A673 (cell line): ENCODE measurements at regions of chr19 and their contacts with region 1.

Region 1: DNA sequence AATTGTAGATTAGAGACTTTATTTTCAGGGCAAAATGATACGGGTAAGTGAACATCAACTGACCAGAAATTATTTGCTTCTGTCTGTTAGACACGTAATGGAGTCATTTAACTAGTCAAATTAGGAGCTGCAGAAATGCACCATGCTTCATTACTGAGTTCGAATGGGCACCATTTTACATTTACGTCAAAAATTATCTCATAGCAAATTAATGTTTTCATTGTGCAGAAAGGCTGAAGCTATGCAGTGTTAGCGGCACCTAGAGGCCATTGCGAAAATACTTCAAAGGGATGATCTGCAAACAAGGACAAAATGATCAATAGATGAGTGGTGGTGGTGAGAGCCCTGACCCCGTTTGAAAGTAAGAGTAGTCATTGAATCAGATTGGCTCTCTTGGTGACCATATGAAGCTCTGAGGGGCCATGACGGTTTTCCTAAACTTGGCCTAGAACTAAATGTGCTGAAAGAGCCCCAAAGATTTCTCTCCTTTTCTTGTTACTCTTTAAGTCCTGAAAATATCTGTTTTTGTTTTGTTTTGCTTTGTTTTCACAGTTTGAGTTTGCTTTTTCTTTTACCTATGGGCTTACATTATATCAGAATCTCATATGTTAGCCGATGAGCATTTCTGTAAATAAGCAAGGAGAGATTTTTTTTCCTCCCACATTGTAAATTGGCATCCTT is 277.9 kb downstream of the ZNF536 start:
- DNase-seq: peak; percentile 80
- H3K4me3 ChIP-seq: no peak overlapping the region
- H3K27ac ChIP-seq: no peak overlapping the region
- H3K4me1 ChIP-seq: no peaks in the 10 kb centered on the region
- H3K27me3 ChIP-seq: no peaks in the 10 kb centered on the region
- CTCF ChIP-seq: peak; percentile 89

Region 2: GRCh38 chr19:29735800-29736199 is 914.3 kb before region 1 on chr19:
- CTCF ChIA-PET with region 1: no interaction called
- POLR2A ChIA-PET with region 1: no interaction called
- intact Hi-C with region 1: loop called (anchors 5 kb)
- DNase-seq: no peak
- H3K4me3 ChIP-seq: no peak overlapping the region
- H3K27ac ChIP-seq: no peak overlapping the region
- H3K4me1 ChIP-seq: no peaks in the 10 kb centered on the region
- H3K27me3 ChIP-seq: no peaks in the 10 kb centered on the region
- CTCF ChIP-seq: no peak

Region 3: GRCh38 chr19:29873024-29873800 is 776.9 kb before region 1 on chr19:
- CTCF ChIA-PET with region 1: no interaction called
- POLR2A ChIA-PET with region 1: no interaction called
- intact Hi-C with region 1: loop called (anchors 10 kb)
- DNase-seq: peak; percentile 48
- H3K4me3 ChIP-seq: peak overlapping the region; percentile 52
- H3K27ac ChIP-seq: no peak overlapping the region
- H3K4me1 ChIP-seq: peaks cover 5% of the 10 kb centered on the region
- H3K27me3 ChIP-seq: no peaks in the 10 kb centered on the region
- CTCF ChIP-seq: peak; percentile 66

Region 4: DNA sequence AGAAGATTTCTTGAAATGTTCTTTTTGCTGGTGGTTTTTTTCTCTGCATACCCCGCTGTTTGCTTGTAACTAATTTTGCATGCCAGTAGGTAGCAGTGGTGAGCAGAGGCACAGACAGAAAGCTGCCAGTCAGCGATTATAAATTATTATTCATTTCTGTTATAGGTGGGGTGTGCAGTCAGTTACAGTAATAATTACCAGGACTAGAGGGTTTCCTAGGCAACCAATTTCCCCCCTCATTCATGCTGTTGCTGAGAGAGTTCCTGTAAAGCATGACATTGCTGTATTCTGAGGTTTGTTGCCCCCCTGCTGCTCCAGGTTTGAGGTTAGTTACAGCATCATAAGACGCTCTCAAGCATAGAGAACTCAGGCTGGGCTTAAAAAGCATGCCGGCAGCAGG is 603.6 kb before region 1 on chr19:
- CTCF ChIA-PET with region 1: no interaction called
- POLR2A ChIA-PET with region 1: no interaction called
- intact Hi-C with region 1: loop called (anchors 2 kb)
- DNase-seq: peak; percentile 39
- H3K4me3 ChIP-seq: no peak overlapping the region
- H3K27ac ChIP-seq: no peak overlapping the region
- H3K4me1 ChIP-seq: peaks cover 24% of the 10 kb centered on the region
- H3K27me3 ChIP-seq: no peaks in the 10 kb centered on the region
- CTCF ChIP-seq: peak; percentile 71

Region 5: GRCh38 chr19:30227661-30228428 is 422.2 kb before region 1 on chr19:
- CTCF ChIA-PET with region 1: no interaction called
- POLR2A ChIA-PET with region 1: no interaction called
- intact Hi-C with region 1: loop called (anchors 1 kb)
- DNase-seq: peak; percentile 78
- H3K4me3 ChIP-seq: peak overlapping the region; percentile 63
- H3K27ac ChIP-seq: peak overlapping the region; percentile 10
- H3K4me1 ChIP-seq: peaks cover 18% of the 10 kb centered on the region
- H3K27me3 ChIP-seq: peaks cover 52% of the 10 kb centered on the region
- CTCF ChIP-seq: peak; percentile 58

Region 6: GRCh38 chr19:30325676-30326392 is 324.2 kb before region 1 on chr19:
- CTCF ChIA-PET with region 1: no interaction called
- POLR2A ChIA-PET with region 1: no interaction called
- intact Hi-C with region 1: no loop called
- DNase-seq: no peak
- H3K4me3 ChIP-seq: no peak overlapping the region
- H3K27ac ChIP-seq: no peak overlapping the region
- H3K4me1 ChIP-seq: no peaks in the 10 kb centered on the region
- H3K27me3 ChIP-seq: no peaks in the 10 kb centered on the region
- CTCF ChIP-seq: no peak

Region 7: GRCh38 chr19:31818798-31819105 is 1168.7 kb after region 1 on chr19:
- CTCF ChIA-PET with region 1: no interaction called
- POLR2A ChIA-PET with region 1: no interaction called
- intact Hi-C with region 1: no loop called
- DNase-seq: no peak
- H3K4me3 ChIP-seq: no peak overlapping the region
- H3K27ac ChIP-seq: no peak overlapping the region
- H3K4me1 ChIP-seq: no peaks in the 10 kb centered on the region
- H3K27me3 ChIP-seq: no peaks in the 10 kb centered on the region
- CTCF ChIP-seq: no peak